ENCODE measurements at regions of chr6 and their contacts with region 1.

Region 1: GRCh38 chr6:134938896-134939295 is 11.0 kb downstream of the ALDH8A1 start:
- DNase-seq: no peak
- H3K4me3 Mint-ChIP-seq: no peak overlapping the region
- H3K27ac Mint-ChIP-seq: no peak overlapping the region
- H3K4me1 Mint-ChIP-seq: peaks cover 18% of the 10 kb centered on the region
- H3K27me3 Mint-ChIP-seq: no peaks in the 10 kb centered on the region

Region 2: GRCh38 chr6:134111062-134111677 is 827.7 kb before region 1 on chr6:
- intact Hi-C with region 1: loop called (anchors 2 kb)
- DNase-seq: no peak
- H3K4me3 Mint-ChIP-seq: no peak overlapping the region
- H3K27ac Mint-ChIP-seq: no peak overlapping the region
- H3K4me1 Mint-ChIP-seq: peaks cover 3% of the 10 kb centered on the region
- H3K27me3 Mint-ChIP-seq: peaks cover 16% of the 10 kb centered on the region

Region 3: DNA sequence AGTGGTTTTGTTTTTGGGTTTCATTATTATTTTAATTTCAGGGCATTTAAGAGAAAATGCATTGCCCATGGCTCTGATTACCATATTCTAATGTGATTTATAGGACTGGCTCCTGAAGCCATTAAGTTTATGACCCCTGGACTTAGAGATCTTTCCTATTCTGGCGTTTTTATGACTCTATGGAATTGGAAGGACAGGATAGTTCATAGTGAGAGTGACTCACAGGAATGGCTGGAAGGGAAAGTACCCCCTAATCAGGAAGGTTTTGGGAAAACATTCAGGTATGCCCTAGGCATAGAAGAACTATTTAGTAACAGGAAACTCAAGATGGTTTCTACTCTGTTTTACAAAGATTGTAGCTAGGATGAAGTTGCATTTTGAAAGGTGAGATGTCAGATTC is 777.9 kb before region 1 on chr6:
- intact Hi-C with region 1: loop called (anchors 1 kb)
- DNase-seq: no peak
- H3K4me3 Mint-ChIP-seq: no peak overlapping the region
- H3K27ac Mint-ChIP-seq: no peak overlapping the region
- H3K4me1 Mint-ChIP-seq: no peaks in the 10 kb centered on the region
- H3K27me3 Mint-ChIP-seq: peaks cover 2% of the 10 kb centered on the region

Region 4: GRCh38 chr6:134822920-134823709 is 115.8 kb before region 1 on chr6:
- intact Hi-C with region 1: loop called (anchors 5 kb)
- DNase-seq: no peak
- H3K4me3 Mint-ChIP-seq: no peak overlapping the region
- H3K27ac Mint-ChIP-seq: no peak overlapping the region
- H3K4me1 Mint-ChIP-seq: no peaks in the 10 kb centered on the region
- H3K27me3 Mint-ChIP-seq: no peaks in the 10 kb centered on the region

Region 5: GRCh38 chr6:134882426-134883038 is 56.4 kb before region 1 on chr6:
- intact Hi-C with region 1: loop called (anchors 2 kb)
- DNase-seq: peak; percentile 28
- H3K4me3 Mint-ChIP-seq: no peak overlapping the region
- H3K27ac Mint-ChIP-seq: no peak overlapping the region
- H3K4me1 Mint-ChIP-seq: no peaks in the 10 kb centered on the region
- H3K27me3 Mint-ChIP-seq: peaks cover 25% of the 10 kb centered on the region

Region 6: GRCh38 chr6:135114355-135115145 is 175.7 kb after region 1 on chr6:
- intact Hi-C with region 1: no loop called
- DNase-seq: peak; percentile 45
- H3K4me3 Mint-ChIP-seq: peak overlapping the region; percentile 58
- H3K27ac Mint-ChIP-seq: peak overlapping the region; percentile 95
- H3K4me1 Mint-ChIP-seq: peaks cover 81% of the 10 kb centered on the region
- H3K27me3 Mint-ChIP-seq: no peaks in the 10 kb centered on the region

Measured in activated T-helper 2 cell treated with anti-CD3 and anti-CD28 coated beads, Interferon-gamma antibody, Interleukin-2, Interleukin-4, amounts not matched to agents 10 μg/mL and 5 μg/mL and 100 μg/mL, durations not matched to agents 14 hours and 24 hours and 36 hours (primary cell).